ENCODE measurements at regions of chrX and their contacts with region 1.

Region 1: GRCh38 chrX:39814391-39814790 is 283.4 kb downstream of the BCOR start:
- DNase-seq: no peak
- H3K4me3 ChIP-seq: no peak overlapping the region
- H3K27ac ChIP-seq: peak overlapping the region; percentile 46 to 63
- H3K4me1 ChIP-seq: peaks cover 0 to 22% of the 10 kb centered on the region in 2 donors
- H3K27me3 ChIP-seq: no peaks in the 10 kb centered on the region
- CTCF ChIP-seq: peak; percentile 19 to 41 (median 28)

Region 2: DNA sequence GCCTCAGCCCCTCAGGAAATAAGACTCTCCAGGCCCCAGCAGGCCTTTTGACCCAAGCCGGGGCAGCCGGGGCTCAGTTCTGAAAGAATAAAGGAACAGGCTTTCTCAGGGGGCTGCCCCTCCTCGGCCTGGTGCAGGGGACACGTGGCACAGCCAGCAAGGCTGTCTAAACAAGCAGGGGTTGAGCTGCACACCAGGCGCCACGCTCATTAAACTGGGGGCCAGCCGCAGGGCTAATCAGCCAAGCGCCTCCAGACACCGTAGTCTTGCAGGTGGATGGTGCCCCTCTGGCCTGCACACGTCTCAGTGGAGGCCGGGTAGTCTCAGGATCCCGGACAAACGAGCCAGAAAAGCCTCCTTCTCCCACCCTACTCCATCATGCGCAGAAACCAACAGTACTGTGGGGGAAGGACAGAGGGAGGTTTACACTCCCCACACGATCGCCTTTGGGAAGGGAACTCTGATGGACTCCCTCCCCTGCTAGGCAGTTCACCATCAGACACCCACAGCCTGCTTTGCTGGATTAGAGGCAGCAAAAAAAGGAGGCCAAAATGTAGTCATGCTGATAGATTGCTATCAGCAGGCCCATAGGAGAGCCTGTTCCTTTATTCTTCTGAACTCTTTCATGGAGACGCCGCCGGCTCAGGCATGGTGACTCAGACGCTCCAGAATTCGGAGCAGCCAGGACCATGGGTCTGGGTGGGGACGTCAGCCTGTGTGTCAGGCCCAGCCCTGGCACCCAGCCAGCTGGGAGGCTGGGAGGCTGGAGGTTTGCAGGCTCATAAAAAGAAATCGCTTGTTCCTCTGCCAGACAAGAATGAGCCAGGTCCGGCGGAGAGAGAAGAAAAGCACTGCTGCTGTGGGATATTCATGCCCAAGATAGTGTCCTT is 59.0 kb before region 1 on chrX:
- intact Hi-C with region 1: loop called (anchors 2 kb)
- DNase-seq: peak; percentile 74 to 95
- H3K4me3 ChIP-seq: no peak overlapping the region
- H3K27ac ChIP-seq: peak overlapping the region; percentile 87 to 91
- H3K4me1 ChIP-seq: peaks cover 3 to 21% of the 10 kb centered on the region in 2 donors
- H3K27me3 ChIP-seq: no peaks in the 10 kb centered on the region
- CTCF ChIP-seq: no peak

Region 3: GRCh38 chrX:39850630-39851152 is 36.3 kb after region 1 on chrX:
- intact Hi-C with region 1: no loop called
- DNase-seq: no peak
- H3K4me3 ChIP-seq: no peak overlapping the region
- H3K27ac ChIP-seq: no peak overlapping the region
- H3K4me1 ChIP-seq: no peaks in the 10 kb centered on the region
- H3K27me3 ChIP-seq: peaks cover 7% of the 10 kb centered on the region
- CTCF ChIP-seq: no peak

Region 4: GRCh38 chrX:40085102-40085551 is 270.7 kb after region 1 on chrX:
- intact Hi-C with region 1: loop called (anchors 5 kb)
- DNase-seq: no peak
- H3K4me3 ChIP-seq: peak overlapping the region in 1 of 2 donors; percentile 63
- H3K27ac ChIP-seq: peak overlapping the region; percentile 44 to 69
- H3K4me1 ChIP-seq: peaks cover 0 to 24% of the 10 kb centered on the region in 2 donors
- H3K27me3 ChIP-seq: no peaks in the 10 kb centered on the region
- CTCF ChIP-seq: no peak

Region 5: GRCh38 chrX:40169193-40170101 is 355.1 kb after region 1 on chrX:
- intact Hi-C with region 1: loop called (anchors 5 kb)
- DNase-seq: peak in 1 of 2 donors; percentile 66
- H3K4me3 ChIP-seq: no peak overlapping the region
- H3K27ac ChIP-seq: no peak overlapping the region
- H3K4me1 ChIP-seq: peaks cover 3 to 11% of the 10 kb centered on the region in 2 donors
- H3K27me3 ChIP-seq: no peaks in the 10 kb centered on the region
- CTCF ChIP-seq: peak in 1 of 3 experiments; percentile 20